Uterus (tissue), 4 donors: ENCODE measurements at regions of chr21 and their contacts with region 1.

Region 1: DNA sequence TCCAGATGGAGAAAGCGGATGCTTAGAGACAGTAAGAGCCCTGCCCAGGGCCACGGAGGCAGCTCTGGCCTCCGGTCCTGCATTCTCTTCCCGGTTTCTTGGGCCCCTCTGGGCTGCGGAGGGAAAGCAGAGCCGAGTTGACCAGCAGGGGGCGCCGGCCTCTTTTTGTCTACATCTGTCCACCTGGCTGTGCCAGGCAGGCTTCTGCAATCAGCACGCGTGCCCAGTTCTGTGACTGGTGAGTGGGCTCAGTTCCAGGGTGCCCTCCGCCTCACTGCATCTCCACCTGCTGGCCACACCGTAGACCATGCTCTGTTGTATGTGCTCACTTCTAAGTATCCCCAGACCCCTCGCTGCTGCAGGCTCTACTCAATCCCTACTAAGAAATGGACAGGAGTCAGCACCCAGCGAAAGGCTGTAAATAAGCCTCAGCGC is 6.7 kb upstream of the HUNK start:
- DNase-seq: peak; percentile 82 to 85
- H3K4me3 ChIP-seq: no peak overlapping the region
- H3K27ac ChIP-seq: no peak overlapping the region
- H3K4me1 ChIP-seq: no peaks in the 10 kb centered on the region
- H3K27me3 ChIP-seq: no peaks in the 10 kb centered on the region
- CTCF ChIP-seq: peak; percentile 66 to 90 (median 82)
- POLR2A ChIP-seq: no peak

Region 2: DNA sequence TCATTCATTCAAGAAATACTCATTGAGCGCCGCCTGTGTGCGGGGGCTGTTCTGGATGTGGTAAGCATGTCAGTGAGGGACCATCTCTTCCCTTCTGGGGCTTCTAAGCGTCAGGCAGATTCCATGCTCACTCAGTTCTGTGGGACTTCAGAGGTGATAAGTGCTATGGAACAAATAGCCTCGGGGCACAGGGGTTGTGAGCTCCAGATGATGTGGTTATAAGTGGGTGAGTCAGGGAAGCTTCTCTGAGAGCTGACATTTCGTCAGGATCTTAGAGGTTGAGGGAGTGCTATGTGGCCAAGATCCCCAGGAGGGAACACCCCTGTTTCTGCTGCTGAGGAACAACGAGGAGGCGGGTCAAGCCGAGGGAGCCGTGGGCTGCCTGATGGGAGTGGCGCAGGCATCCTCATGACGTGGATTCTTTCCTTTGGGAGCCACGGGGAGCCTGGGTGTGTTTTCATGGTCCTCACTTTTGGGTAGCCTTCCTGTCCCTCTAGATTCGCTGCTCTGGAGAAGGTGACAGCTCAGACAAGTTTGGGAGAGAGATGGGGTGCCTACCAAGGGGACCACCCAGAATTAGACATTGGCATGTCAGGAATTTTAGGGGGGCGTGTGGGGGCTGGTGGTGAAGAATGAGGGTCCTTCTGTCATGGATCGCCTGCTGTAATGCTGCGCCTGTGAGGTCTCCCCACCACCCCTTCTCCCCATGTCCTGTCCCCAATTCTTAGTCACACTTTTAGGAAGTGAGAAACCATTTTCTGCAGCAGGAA is 45.2 kb after region 1 on chr21:
- intact Hi-C with region 1: loop called (anchors 5 kb)
- DNase-seq: no peak
- H3K4me3 ChIP-seq: no peak overlapping the region
- H3K27ac ChIP-seq: no peak overlapping the region
- H3K4me1 ChIP-seq: no peaks in the 10 kb centered on the region
- H3K27me3 ChIP-seq: no peaks in the 10 kb centered on the region
- CTCF ChIP-seq: no peak
- POLR2A ChIP-seq: no peak

Region 3: DNA sequence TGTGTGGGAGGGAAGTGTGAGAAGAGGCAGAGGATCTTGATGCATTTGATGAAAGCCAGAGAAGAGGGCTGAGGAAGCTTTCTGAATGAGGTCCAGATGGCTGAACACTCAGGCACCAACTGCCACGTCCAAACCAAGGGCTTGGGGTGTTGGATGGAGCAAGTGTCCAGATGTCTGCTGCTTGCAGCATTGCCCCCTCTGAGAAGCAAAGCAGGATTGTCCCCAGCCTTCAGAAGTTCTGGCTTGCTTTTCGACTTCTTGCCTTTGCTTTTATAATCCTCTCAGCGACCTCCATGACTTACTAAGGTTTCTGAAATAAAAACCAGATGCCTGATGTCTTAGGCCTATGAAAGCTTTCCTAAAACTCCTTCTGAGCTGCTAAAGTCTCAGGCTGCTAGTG is 189.2 kb after region 1 on chr21:
- intact Hi-C with region 1: no loop called
- DNase-seq: no peak
- H3K4me3 ChIP-seq: no peak overlapping the region
- H3K27ac ChIP-seq: no peak overlapping the region
- H3K4me1 ChIP-seq: no peaks in the 10 kb centered on the region
- H3K27me3 ChIP-seq: no peaks in the 10 kb centered on the region
- CTCF ChIP-seq: no peak
- POLR2A ChIP-seq: no peak

Region 4: DNA sequence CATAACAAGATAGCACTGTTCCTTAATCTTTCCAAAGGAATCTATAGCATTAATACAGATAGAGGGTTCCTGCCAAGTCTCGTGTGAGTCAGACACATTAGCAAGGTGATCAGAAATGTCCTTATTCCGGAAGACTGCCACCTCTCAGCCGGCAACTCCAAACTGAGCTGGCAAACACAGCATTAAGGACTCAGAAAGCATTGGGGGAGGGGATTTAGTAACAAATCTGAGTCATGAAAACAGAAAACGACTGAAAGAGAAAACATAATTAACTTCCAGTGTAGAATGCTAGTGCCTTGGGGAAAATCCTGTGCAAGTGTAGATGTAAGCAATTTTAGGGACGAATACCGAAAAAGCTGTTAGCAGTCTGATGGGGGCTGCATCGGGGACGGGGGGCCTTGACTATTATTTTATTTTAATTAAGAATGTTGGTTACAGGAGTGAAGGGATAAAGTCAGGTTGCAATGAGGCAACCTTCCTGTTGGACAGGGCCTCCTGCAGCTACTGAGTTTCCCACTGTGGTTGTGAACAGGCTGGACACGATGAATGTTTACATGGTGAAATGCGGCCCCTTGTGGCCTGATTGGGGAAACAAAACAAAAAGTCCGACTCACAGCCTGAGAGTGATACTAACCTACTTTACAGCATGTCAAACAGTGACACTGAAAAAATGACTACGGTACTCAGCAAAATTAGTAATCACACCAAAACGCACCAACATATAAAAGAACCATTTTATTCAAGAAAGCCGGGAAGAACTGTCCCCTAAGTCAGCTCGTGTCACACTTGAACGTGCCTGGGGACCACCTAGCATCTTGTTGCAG is 392.1 kb after region 1 on chr21:
- intact Hi-C with region 1: loop called (anchors 5 kb)
- DNase-seq: peak; percentile 65 to 70
- H3K4me3 ChIP-seq: no peak overlapping the region
- H3K27ac ChIP-seq: peak overlapping the region; percentile 51 to 63
- H3K4me1 ChIP-seq: peaks cover 0 to 6% of the 10 kb centered on the region in 2 donors
- H3K27me3 ChIP-seq: no peaks in the 10 kb centered on the region
- CTCF ChIP-seq: peak; percentile 62 to 80 (median 76)
- POLR2A ChIP-seq: no peak